ENCODE measurements at regions of chr13 and their contacts with region 1.

Region 1: DNA sequence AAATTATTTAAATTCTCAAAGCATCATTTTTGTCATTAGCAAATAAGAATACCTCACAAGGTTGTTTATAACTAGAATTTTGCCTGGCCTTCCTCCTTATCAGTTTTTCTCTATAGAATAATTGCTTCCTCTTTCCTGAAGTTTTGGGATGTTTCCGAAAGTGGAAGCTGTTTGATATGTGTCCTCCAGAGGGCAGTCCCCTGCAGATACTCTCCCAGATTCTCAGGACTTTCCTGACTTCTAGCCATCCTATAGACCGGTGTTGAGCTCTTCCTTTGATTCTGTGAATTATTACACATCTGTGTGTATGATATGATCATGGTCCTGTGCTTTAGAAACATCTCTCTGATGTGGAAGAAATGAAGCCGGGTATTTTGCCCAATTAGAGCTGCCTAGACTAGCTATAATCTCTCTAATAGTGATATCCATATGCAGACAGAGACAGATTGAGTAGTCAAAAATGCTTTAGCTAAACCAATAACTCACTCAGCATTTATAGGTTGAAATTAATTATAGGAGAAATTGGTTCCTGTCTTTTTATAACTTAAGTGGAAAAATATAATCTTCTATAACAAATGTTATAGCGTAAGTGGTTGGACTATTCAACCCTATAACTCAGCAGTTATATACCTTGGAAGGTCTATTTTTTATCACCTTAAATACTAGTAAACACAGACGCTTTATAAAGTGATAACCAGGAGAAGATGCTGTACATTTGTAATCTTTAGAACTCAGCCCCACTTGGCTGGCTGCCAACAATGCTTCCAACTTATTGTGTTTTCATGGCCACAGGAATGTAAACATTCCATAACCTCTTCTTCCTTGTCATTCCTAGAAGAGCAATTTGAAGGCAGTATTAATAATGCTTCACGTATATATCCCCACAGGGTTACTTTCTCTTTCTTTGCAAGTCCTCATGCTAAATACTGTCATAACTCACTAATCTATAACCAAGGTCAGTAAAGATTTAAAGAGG is 201.0 kb upstream of the RXFP2 start:
- DNase-seq: no peak
- H3K4me3 ChIP-seq: no peak overlapping the region
- H3K27ac ChIP-seq: no peak overlapping the region
- H3K27me3 ChIP-seq: peaks cover 9% of the 10 kb centered on the region
- CTCF ChIP-seq: peak; percentile 76

Region 2: GRCh38 chr13:31518645-31519044 is 19.7 kb before region 1 on chr13:
- CTCF ChIA-PET with region 1: interaction called, 16 read pairs
- POLR2A ChIA-PET with region 1: no interaction called
- DNase-seq: no peak
- H3K4me3 ChIP-seq: no peak overlapping the region
- H3K27ac ChIP-seq: no peak overlapping the region
- H3K27me3 ChIP-seq: peaks cover 4% of the 10 kb centered on the region
- CTCF ChIP-seq: no peak

Region 3: GRCh38 chr13:31733066-31733465 is 194.7 kb after region 1 on chr13:
- CTCF ChIA-PET with region 1: interaction called, 12 read pairs
- POLR2A ChIA-PET with region 1: no interaction called
- DNase-seq: no peak
- H3K4me3 ChIP-seq: peak overlapping the region; percentile 18; the same call in 1 of the 2 replicates
- H3K27ac ChIP-seq: no peak overlapping the region
- H3K27me3 ChIP-seq: no peaks in the 10 kb centered on the region
- CTCF ChIP-seq: no peak

Region 4: GRCh38 chr13:31742097-31742734 is 203.9 kb after region 1 on chr13:
- CTCF ChIA-PET with region 1: interaction called, 140 read pairs
- POLR2A ChIA-PET with region 1: no interaction called
- DNase-seq: peak; percentile 42
- H3K4me3 ChIP-seq: no peak overlapping the region; the same call in none of the 2 replicates
- H3K27ac ChIP-seq: no peak overlapping the region
- H3K27me3 ChIP-seq: no peaks in the 10 kb centered on the region
- CTCF ChIP-seq: peak; percentile 99

Region 5: DNA sequence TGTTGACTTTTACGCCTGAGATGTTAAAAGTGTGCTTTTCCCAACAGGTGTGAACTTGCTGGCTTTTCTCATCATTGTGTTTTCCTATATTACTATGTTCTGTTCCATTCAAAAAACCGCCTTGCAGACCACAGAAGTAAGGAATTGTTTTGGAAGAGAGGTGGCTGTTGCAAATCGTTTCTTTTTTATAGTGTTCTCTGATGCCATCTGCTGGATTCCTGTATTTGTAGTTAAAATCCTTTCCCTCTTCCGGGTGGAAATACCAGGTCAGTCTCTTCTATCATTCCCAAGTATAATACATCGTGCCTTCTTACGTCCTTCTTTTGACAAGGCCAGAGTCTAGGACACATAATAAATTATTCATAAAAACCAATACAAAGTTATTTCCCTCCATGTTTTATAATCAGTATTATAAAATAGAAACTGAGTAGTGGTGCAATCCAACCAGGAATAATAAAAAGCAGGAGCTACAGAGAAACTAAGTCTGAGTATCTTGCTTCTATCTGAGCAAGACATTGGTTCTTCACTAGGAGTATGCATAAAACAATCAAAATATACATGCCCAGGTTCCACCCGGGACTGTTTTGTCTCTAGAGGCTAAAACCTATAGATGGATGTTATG is 258.9 kb after region 1 on chr13:
- CTCF ChIA-PET with region 1: interaction called, 30 read pairs
- POLR2A ChIA-PET with region 1: no interaction called
- DNase-seq: peak; percentile 2
- H3K4me3 ChIP-seq: no peak overlapping the region
- H3K27ac ChIP-seq: no peak overlapping the region
- H3K27me3 ChIP-seq: peaks cover 5% of the 10 kb centered on the region
- CTCF ChIP-seq: peak; percentile 57

Measured in AG04450 (cell line).